ENCODE measurements at regions of chr2 and their contacts with region 1.

Region 1: DNA sequence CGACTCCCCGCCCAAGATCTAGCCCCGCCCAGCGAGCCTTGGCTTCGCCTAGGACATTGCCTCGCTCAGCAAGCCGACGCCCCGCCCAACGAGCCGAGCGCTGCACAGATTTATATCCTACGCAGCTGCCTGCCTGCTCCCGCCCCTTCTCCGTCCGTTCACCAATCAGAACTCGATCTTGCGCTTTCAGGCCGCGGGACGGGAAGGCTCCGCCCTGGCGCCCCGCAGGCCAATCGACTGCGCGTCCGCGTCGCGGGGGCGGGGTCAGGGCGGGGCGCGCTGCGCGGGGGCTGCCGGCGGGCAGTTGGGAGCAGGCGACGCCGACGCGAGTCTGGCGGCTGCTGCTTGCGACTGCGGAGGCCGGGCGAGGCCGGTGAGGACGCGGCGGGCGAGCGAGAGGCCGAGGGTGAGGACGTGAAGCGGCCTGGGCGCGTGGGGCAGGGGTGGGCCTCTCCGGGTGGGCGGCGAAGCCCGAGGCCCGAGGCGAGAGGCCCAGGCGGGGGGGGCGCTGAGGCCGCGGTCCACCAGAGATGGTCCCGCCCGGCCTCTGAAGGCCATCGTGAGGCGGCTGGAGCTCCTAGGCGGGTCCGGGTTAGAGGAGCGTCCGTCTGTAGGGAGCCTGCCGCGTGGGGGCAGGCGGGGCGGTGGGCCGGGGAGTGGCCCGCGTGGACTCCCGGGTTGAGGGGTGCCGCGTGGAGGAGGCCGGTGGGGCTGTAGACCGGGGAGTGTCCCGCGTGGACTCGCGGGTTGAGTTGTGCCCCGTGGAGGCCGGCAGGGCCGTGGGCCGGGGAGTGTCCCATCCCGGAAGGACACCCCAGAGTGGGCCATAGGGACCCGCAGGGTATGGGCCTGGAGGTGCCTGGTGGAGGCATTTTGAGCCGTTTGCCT is at the start of gene FARP2:
- DNase-seq: peak; percentile 98
- ATAC-seq: peak; percentile 95
- H3K4me3 ChIP-seq: peak within 1 kb of the TSS; percentile 76
- H3K27ac ChIP-seq: peak within 1 kb of the TSS; percentile 70
- H3K4me1 ChIP-seq: peaks cover 8% of the 10 kb centered on the region
- H3K27me3 ChIP-seq: no peaks in the 10 kb centered on the region
- CTCF ChIP-seq: no peak
- POLR2A ChIP-seq: peak; percentile 93
- RAD21 ChIP-seq: no peak
- total RNA-seq, gene FARP2: 30.8 and 38.6 TPM in 2 replicates

Region 2: DNA sequence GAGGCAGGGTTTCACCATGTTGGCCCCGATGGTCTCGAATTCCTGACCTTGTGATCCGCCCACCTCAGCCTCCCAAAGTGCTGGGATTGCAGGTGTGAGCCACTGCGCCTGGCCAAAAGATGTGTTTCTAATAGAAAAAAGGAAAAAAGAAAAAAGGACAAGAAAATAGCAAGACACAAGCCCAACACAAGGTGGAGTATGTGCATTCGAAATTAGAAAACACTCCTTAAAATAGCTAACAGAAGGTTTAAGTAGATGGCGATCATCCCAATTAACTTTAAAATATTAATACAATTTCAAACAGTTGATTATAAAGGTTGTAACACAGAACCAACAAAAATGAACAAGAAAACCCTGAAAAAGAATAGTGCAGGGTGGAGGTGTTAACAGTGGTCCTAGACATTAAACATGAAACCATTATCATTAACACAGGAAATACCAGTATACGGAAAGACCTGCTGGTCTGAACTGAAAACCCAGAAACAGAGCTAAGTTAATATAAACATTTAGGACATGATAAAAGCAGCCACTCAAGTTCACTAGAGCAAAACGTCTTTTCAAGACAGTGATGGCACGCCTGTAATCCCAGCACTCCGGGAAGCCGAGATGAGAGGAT is 98.7 kb before region 1 on chr2:
- CTCF ChIA-PET with region 1: interaction called, 3 read pairs
- POLR2A ChIA-PET with region 1: no interaction called
- dilution Hi-C with region 1: no loop called
- in situ Hi-C with region 1: no loop called
- intact Hi-C with region 1: loop called (anchors 5 kb)
- DNase-seq: no peak
- ATAC-seq: no peak
- H3K4me3 ChIP-seq: no peak overlapping the region
- H3K27ac ChIP-seq: no peak overlapping the region
- H3K4me1 ChIP-seq: no peaks in the 10 kb centered on the region
- H3K27me3 ChIP-seq: no peaks in the 10 kb centered on the region
- CTCF ChIP-seq: peak; percentile 24; the same call in 1 of the 2 replicates
- POLR2A ChIP-seq: no peak
- RAD21 ChIP-seq: no peak

Region 3: GRCh38 chr2:241399941-241400919 is 44.0 kb after region 1 on chr2:
- CTCF ChIA-PET with region 1: no interaction called
- POLR2A ChIA-PET with region 1: no interaction called
- dilution Hi-C with region 1: no loop called
- in situ Hi-C with region 1: no loop called
- intact Hi-C with region 1: no loop called
- DNase-seq: no peak
- ATAC-seq: no peak
- H3K4me3 ChIP-seq: no peak overlapping the region
- H3K27ac ChIP-seq: no peak overlapping the region
- H3K4me1 ChIP-seq: no peaks in the 10 kb centered on the region
- H3K27me3 ChIP-seq: no peaks in the 10 kb centered on the region
- CTCF ChIP-seq: no peak
- POLR2A ChIP-seq: no peak
- RAD21 ChIP-seq: no peak

Region 4: GRCh38 chr2:241558532-241559322 is 202.5 kb after region 1 on chr2 and contains the start of gene BOK:
- CTCF ChIA-PET with region 1: no interaction called
- POLR2A ChIA-PET with region 1: no interaction called
- dilution Hi-C with region 1: no loop called
- in situ Hi-C with region 1: no loop called
- intact Hi-C with region 1: loop called (anchors 5 kb)
- DNase-seq: peak; percentile 72
- ATAC-seq: peak; percentile 74
- H3K4me3 ChIP-seq: peak within 1 kb of the TSS; percentile 91
- H3K27ac ChIP-seq: peak within 1 kb of the TSS; percentile 77
- H3K4me1 ChIP-seq: peaks cover 16% of the 10 kb centered on the region
- H3K27me3 ChIP-seq: no peaks in the 10 kb centered on the region
- CTCF ChIP-seq: no peak
- POLR2A ChIP-seq: no peak
- RAD21 ChIP-seq: no peak
- total RNA-seq, gene BOK: 13.3 and 15.8 TPM in 2 replicates

Region 5: GRCh38 chr2:241637000-241637791 is 281.0 kb after region 1 on chr2 and contains the starts of genes ATG4B and THAP4:
- CTCF ChIA-PET with region 1: no interaction called
- POLR2A ChIA-PET with region 1: no interaction called
- dilution Hi-C with region 1: no loop called
- in situ Hi-C with region 1: no loop called
- intact Hi-C with region 1: loop called (anchors 5 kb)
- DNase-seq: peak; percentile 82
- ATAC-seq: peak; percentile 87
- H3K4me3 ChIP-seq: peak within 1 kb of the TSS; percentile 100
- H3K27ac ChIP-seq: peak within 1 kb of the TSS; percentile 100
- H3K4me1 ChIP-seq: peaks cover 3% of the 10 kb centered on the region; the same call in 1 of the 2 replicates
- H3K27me3 ChIP-seq: no peaks in the 10 kb centered on the region
- CTCF ChIP-seq: no peak
- POLR2A ChIP-seq: peak; percentile 82
- RAD21 ChIP-seq: no peak
- total RNA-seq, gene ATG4B: 102 and 146 TPM in 2 replicates
- total RNA-seq, gene THAP4: 33.9 and 42.2 TPM in 2 replicates

Region 6: GRCh38 chr2:241659150-241659739 is 303.0 kb after region 1 on chr2:
- CTCF ChIA-PET with region 1: no interaction called
- POLR2A ChIA-PET with region 1: no interaction called
- dilution Hi-C with region 1: no loop called
- in situ Hi-C with region 1: no loop called
- intact Hi-C with region 1: loop called (anchors 5 kb)
- DNase-seq: peak; percentile 73
- ATAC-seq: peak; percentile 89
- H3K4me3 ChIP-seq: no peak overlapping the region
- H3K27ac ChIP-seq: no peak overlapping the region
- H3K4me1 ChIP-seq: no peaks in the 10 kb centered on the region
- H3K27me3 ChIP-seq: no peaks in the 10 kb centered on the region
- CTCF ChIP-seq: peak; percentile 77
- POLR2A ChIP-seq: no peak
- RAD21 ChIP-seq: peak; percentile 88